ENCODE measurements at regions of chr17 and their contacts with region 1.

Region 1: DNA sequence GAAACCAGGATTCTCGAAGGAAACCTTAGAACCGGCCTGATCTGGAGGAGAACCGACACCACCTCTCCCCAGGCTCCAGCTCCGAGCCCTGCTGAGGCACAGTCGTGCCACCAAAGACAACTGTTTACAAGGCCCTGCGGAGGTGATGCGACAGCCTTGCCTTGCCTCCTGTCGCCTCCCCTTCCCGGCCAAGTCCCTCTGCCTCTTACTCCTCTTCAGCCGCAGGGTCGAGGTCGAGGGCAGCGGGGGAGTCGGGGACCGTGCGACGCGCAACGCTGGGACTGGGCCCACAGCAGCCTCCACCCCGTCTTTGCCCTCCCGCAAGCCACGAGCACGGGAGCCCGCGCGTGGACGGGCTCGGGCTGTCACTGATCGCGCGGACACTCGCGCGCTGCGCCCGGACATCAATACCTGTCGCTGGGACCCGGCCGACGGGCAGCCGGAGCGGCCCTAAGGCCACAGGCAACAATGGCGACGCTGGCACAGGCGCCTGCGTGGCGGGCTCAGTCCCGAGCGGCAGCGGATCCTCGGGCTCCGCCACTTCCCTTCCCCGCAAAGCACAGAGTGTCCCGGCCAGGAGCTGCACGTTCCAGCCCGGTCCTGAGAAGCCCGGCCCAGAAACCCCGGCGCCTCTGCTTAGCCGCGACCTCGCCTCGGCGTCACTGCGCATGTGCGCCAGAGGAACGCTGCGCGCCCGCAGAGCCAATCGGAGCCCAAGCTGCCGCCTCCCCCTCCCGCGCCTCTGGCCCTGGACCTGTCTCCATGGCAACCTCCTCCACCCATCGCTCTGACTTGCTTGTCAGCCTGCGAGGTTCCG is at the start of gene ZNF287:
- DNase-seq: peak; percentile 90
- H3K4me3 Mint-ChIP-seq: peak within 1 kb of the TSS; percentile 86
- H3K27ac Mint-ChIP-seq: peak within 1 kb of the TSS; percentile 62
- H3K4me1 Mint-ChIP-seq: peaks cover 11% of the 10 kb centered on the region
- H3K27me3 Mint-ChIP-seq: peaks cover 4% of the 10 kb centered on the region
- total RNA-seq, gene ZNF287: 4.8 and 7.1 TPM in 2 replicates

Region 2: DNA sequence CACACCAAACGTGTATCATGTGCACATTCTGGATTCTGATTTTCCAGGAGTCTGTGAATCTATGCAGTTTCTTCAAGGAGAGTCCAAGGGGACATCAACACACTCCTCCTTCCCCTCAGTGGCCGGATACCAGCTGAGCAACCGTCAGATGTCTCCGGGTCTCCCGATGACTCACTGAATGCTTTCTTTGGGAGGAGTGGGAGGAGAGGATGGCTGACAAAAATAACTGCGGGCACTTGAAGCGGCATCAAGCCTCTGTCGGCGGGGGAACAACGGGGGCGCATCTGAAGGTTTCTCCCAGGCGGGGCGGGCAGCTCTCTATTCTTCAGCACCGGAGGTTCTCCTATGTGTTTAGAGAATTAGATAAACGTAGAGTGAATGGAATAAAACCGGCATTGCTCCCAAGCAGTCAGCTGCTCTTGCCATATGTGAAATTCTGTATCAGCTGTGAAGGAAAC is 52.1 kb before region 1 on chr17:
- intact Hi-C with region 1: no loop called
- DNase-seq: no peak
- H3K4me3 Mint-ChIP-seq: no peak overlapping the region
- H3K27ac Mint-ChIP-seq: no peak overlapping the region
- H3K4me1 Mint-ChIP-seq: peaks cover 32% of the 10 kb centered on the region
- H3K27me3 Mint-ChIP-seq: peaks cover 30% of the 10 kb centered on the region

Region 3: DNA sequence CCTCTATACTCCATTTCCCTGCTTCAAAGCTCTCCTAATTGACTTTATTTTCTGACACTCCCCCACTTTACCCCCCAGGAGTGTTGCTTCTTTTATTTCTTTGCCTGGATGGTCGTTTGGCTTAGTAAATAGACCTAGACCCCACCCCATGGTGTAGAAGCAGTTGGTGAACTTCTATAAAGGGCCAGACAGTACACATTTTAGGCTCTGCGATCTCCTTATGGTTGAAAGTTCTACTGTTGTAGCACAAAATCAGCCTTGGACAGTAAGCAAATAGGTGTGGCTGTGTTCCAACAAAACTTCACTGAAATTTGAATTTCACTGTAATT is 31.7 kb before region 1 on chr17:
- intact Hi-C with region 1: loop called (anchors 1 kb)
- DNase-seq: no peak
- H3K4me3 Mint-ChIP-seq: peak overlapping the region; percentile 91
- H3K27ac Mint-ChIP-seq: peak overlapping the region; percentile 52
- H3K4me1 Mint-ChIP-seq: peaks cover 16% of the 10 kb centered on the region
- H3K27me3 Mint-ChIP-seq: no peaks in the 10 kb centered on the region

Region 4: GRCh38 chr17:16653209-16654041 is 84.7 kb after region 1 on chr17 and contains the start of gene ZNF624:
- intact Hi-C with region 1: loop called (anchors 1 kb)
- DNase-seq: peak; percentile 80
- H3K4me3 Mint-ChIP-seq: peak within 1 kb of the TSS; percentile 87
- H3K27ac Mint-ChIP-seq: peak within 1 kb of the TSS; percentile 44
- H3K4me1 Mint-ChIP-seq: peaks cover 13% of the 10 kb centered on the region
- H3K27me3 Mint-ChIP-seq: peaks cover 2% of the 10 kb centered on the region
- total RNA-seq, gene ZNF624: 2.0 and 2.8 TPM in 2 replicates

Measured in activated T-helper 1 cell treated with anti-CD3 and anti-CD28 coated beads, Interleukin-12 subunit alpha, Interleukin-12 subunit beta, Interleukin-2, Interleukin-4 antibody, amounts not matched to agents 30 ng/mL and 10 ng/mL and 1 ng/mL, durations not matched to agents 14 hours and 24 hours and 36 hours (primary cell).